Activated CD4-positive, alpha-beta T cell treated with anti-CD3 and anti-CD28 coated beads, Interleukin-2, amount 10 ng/mL, durations not matched to agents 24 days and 14 days (primary cell): ENCODE measurements at regions of chr20 and their contacts with region 1.

Region 1: GRCh38 chr20:1685304-1686052 is 27.9 kb upstream of the SIRPG start:
- DNase-seq: peak; percentile 71
- H3K4me3 Mint-ChIP-seq: peak overlapping the region; percentile 81
- H3K27ac Mint-ChIP-seq: peak overlapping the region; percentile 83
- H3K4me1 Mint-ChIP-seq: peaks cover 54% of the 10 kb centered on the region
- H3K27me3 Mint-ChIP-seq: no peaks in the 10 kb centered on the region

Region 2: DNA sequence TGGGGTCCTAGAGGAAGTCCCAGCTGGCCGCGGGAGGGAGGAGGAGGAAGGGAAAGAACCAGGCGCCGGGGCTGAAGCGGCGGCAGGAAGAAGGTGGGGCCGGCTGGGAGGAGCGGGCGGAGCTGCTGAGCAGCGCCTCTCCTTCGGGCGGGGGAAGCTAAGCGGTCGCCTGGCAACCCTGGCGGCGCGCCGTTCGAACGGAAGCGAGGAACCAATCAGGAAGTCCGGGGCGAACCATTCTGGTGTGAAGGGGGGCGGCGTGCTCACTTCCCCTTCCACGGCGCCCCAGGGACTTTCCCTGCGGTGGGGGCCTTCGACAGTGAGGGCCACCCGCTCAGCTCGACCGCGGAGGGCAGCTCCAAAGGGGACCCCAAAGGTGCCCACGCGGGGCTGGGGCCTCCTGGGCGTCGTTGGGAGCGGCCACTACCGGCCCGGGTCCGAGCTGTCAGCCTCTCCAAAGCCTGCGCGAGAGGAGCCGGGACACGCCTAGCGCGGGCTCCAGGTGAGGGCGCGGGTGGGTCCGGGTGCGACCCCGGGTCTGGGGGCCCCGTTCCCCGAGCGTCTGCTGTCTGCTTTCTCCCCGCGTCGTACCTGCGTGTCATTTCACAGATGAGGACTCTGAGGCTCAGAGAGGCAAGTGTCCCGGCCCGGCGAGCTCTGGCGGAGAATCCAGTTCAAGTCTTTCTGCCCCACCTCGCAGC is 851.9 kb before region 1 on chr20 and contains the start of gene FAM110A:
- intact Hi-C with region 1: loop called (anchors 10 kb)
- DNase-seq: peak; percentile 99
- H3K4me3 Mint-ChIP-seq: peak within 1 kb of the TSS; percentile 84
- H3K27ac Mint-ChIP-seq: peak within 1 kb of the TSS; percentile 85
- H3K4me1 Mint-ChIP-seq: peaks cover 43% of the 10 kb centered on the region
- H3K27me3 Mint-ChIP-seq: no peaks in the 10 kb centered on the region
- total RNA-seq, gene FAM110A: 13.3 and 15.4 TPM in 2 replicates

Region 3: DNA sequence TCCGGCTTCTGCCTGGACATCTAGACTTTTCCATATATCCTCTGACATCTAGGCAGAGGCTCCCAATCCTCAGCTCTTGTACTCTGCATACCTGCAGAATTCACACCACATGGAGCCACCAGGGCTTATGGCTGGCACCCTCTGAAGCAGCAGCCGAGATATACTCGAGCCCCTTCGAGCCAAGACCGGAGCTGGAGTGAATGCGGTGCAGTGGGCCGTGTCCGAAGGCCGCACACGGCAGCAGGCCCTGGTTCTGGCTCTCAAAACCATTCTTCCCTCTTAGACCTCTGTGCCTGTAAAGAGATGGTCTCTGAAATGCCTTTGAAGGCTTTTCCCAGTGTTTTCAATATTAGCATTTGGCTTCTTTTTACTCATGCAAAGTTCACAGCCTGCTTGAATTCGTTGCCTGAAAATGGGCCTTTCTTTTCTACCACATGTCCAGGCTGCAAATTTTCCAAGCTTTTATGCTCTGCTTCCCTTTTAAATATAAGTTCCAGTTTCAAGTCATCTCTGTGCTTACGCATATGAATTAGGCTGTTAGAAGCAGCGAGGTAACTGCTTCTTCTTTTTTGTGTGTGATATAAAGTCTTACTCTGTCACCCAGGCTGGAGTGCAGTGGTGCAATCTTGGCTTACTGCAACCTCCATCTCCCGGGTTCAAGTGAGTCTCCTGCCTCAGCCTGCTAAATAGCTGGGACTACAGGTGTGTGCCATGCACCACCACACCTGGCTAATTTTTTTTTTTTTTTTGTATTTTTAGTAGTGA is 61.8 kb before region 1 on chr20:
- intact Hi-C with region 1: loop called (anchors 2 kb)
- DNase-seq: no peak
- H3K4me3 Mint-ChIP-seq: no peak overlapping the region
- H3K27ac Mint-ChIP-seq: peak overlapping the region; percentile 17
- H3K4me1 Mint-ChIP-seq: peaks cover 81% of the 10 kb centered on the region
- H3K27me3 Mint-ChIP-seq: no peaks in the 10 kb centered on the region

Region 4: DNA sequence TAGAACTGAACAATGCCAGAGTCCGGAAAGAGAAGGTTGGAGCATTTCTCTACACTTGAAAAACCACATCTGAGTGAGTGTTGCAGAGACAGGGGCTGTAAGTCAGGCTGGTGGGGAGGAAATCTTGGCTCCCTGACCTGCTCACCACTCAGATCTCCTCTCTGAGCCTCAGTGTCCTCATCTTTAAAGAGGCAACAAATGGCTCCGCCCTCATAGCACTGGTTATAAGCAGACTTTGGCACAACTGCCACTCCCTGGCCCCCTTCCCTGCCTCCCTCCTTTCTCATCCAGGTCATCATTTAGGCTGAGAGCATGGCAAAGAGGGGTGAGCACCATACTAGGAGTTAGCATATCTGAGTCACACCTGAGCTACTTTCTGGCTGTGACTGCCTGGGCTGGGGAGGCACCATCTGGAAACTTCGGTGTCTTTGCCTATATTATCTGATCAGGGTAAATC is 38.5 kb before region 1 on chr20:
- intact Hi-C with region 1: loop called (anchors 5 kb)
- DNase-seq: no peak
- H3K4me3 Mint-ChIP-seq: peak overlapping the region; percentile 29
- H3K27ac Mint-ChIP-seq: peak overlapping the region; percentile 92
- H3K4me1 Mint-ChIP-seq: peaks cover 45% of the 10 kb centered on the region
- H3K27me3 Mint-ChIP-seq: no peaks in the 10 kb centered on the region

Region 5: GRCh38 chr20:1657556-1658334 is 27.7 kb before region 1 on chr20 and contains the start of gene SIRPG:
- intact Hi-C with region 1: loop called (anchors 1 kb)
- DNase-seq: peak; percentile 85
- H3K4me3 Mint-ChIP-seq: peak within 1 kb of the TSS; percentile 94
- H3K27ac Mint-ChIP-seq: peak within 1 kb of the TSS; percentile 98
- H3K4me1 Mint-ChIP-seq: peaks cover 84% of the 10 kb centered on the region
- H3K27me3 Mint-ChIP-seq: no peaks in the 10 kb centered on the region
- total RNA-seq, gene SIRPG: 33.8 and 34.3 TPM in 2 replicates

Region 6: GRCh38 chr20:1671891-1672669 is 13.4 kb before region 1 on chr20:
- intact Hi-C with region 1: loop called (anchors 1 kb)
- DNase-seq: peak; percentile 68
- H3K4me3 Mint-ChIP-seq: peak overlapping the region; percentile 72
- H3K27ac Mint-ChIP-seq: peak overlapping the region; percentile 91
- H3K4me1 Mint-ChIP-seq: peaks cover 82% of the 10 kb centered on the region
- H3K27me3 Mint-ChIP-seq: no peaks in the 10 kb centered on the region